Aorta (tissue), 5 donors: ENCODE measurements at regions of chr5 and their contacts with region 1.

Region 1: GRCh38 chr5:107571621-107572536 is 98.9 kb downstream of the EFNA5 start:
- DNase-seq: peak; percentile 93 to 98
- ATAC-seq: peak; percentile 95
- H3K4me3 ChIP-seq: peak overlapping the region; percentile 42 to 73
- H3K27ac ChIP-seq: peak overlapping the region in 1 of 2 donors; percentile 31
- H3K4me1 ChIP-seq: peaks cover 0 to 7% of the 10 kb centered on the region in 2 donors
- H3K27me3 ChIP-seq: no peaks in the 10 kb centered on the region

Region 2: DNA sequence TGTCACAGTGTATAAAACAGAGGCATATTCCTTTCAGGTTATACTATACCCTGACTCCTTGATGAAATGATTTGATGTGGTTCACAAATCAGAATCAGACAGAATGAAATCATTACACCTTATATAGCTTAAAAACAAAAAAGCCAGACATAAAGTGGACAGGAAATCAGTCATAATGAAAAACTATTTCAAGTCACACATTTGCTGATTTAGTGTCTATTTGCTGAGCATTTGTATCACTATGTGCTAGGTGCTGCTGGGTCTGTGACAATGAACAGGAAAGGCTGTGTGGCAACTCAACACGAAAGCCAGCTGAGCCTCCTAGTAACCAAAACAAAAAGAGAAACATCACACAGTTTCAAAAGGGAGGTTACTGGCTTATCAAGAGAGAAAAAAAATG is 95.1 kb before region 1 on chr5:
- intact Hi-C with region 1: loop called in 1 of 2 experiments (anchors 10 kb)
- DNase-seq: no peak
- ATAC-seq: no peak
- H3K4me3 ChIP-seq: no peak overlapping the region
- H3K27ac ChIP-seq: no peak overlapping the region
- H3K4me1 ChIP-seq: peaks cover 0 to 3% of the 10 kb centered on the region in 2 donors
- H3K27me3 ChIP-seq: no peaks in the 10 kb centered on the region